ENCODE measurements at regions of chr12 and their contacts with region 1.

Region 1: GRCh38 chr12:53476769-53477209 is 22.5 kb downstream of the MAP3K12 start:
- DNase-seq: no peak
- H3K4me3 ChIP-seq: no peak overlapping the region
- H3K27ac ChIP-seq: no peak overlapping the region
- H3K4me1 ChIP-seq: peaks cover 10% of the 10 kb centered on the region
- H3K27me3 ChIP-seq: no peaks in the 10 kb centered on the region
- CTCF ChIP-seq: peak; percentile 14 to 32

Region 2: DNA sequence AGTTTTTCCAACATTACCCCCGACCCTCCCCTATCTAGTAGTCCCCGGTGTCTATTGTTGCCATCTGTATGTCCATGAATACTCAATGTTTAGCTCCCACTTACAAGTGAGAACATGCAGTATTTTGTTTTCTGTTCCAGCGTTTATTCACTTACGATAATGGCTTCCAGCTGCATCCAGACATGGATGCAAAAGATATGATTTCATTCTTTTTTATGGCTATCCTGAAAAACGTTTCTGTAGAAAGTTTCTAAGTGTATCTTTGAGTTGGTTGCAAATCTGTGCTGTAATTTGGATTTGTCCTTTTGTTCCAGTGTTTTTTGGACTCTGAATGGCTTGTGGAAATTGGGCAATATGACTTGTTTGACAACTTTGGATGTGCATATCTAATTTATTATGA is 85.1 kb before region 1 on chr12:
- CTCF ChIA-PET with region 1: interaction called, 28 read pairs
- dilution Hi-C with region 1: no loop called
- in situ Hi-C with region 1: no loop called
- intact Hi-C with region 1: no loop called
- DNase-seq: no peak
- H3K4me3 ChIP-seq: no peak overlapping the region
- H3K27ac ChIP-seq: no peak overlapping the region
- H3K4me1 ChIP-seq: peaks cover 8% of the 10 kb centered on the region
- H3K27me3 ChIP-seq: no peaks in the 10 kb centered on the region
- CTCF ChIP-seq: no peak

Region 3: GRCh38 chr12:53508534-53509199 is 31.9 kb after region 1 on chr12:
- CTCF ChIA-PET with region 1: no interaction called
- dilution Hi-C with region 1: no loop called
- in situ Hi-C with region 1: no loop called
- intact Hi-C with region 1: loop called (anchors 2 kb)
- DNase-seq: peak; percentile 61
- H3K4me3 ChIP-seq: no peak overlapping the region
- H3K27ac ChIP-seq: no peak overlapping the region
- H3K4me1 ChIP-seq: no peaks in the 10 kb centered on the region
- H3K27me3 ChIP-seq: no peaks in the 10 kb centered on the region
- CTCF ChIP-seq: peak; percentile 93 to 97

Region 4: DNA sequence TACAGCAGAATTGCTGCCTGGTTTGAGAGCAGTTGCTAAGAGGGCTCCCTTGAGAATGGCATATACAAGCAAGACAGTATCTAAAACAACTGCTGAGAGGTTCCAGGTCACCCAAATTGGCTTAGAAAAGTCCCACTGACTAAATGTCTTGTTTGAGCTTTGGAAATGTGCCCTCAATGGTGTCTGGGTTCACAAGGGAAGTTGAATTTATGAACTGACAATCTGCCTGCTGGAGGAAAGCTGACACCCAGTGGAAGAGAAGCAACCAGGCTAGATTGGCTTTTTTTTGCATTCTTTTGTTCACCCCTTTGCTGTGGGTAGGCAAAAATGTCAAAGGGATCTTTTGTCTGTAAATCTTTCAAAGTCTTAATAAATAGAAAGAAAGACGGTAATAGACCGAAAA is 75.1 kb after region 1 on chr12:
- CTCF ChIA-PET with region 1: no interaction called
- dilution Hi-C with region 1: no loop called
- in situ Hi-C with region 1: no loop called
- intact Hi-C with region 1: no loop called
- DNase-seq: no peak
- H3K4me3 ChIP-seq: no peak overlapping the region
- H3K27ac ChIP-seq: no peak overlapping the region
- H3K4me1 ChIP-seq: no peaks in the 10 kb centered on the region
- H3K27me3 ChIP-seq: no peaks in the 10 kb centered on the region
- CTCF ChIP-seq: no peak

Measured in mammary epithelial cell (primary cell).